ENCODE measurements at regions of chr18 and their contacts with region 1.

Region 1: GRCh38 chr18:70428439-70428838 is 139.6 kb downstream of the SOCS6 start:
- DNase-seq: no peak
- ATAC-seq: no peak
- H3K4me3 ChIP-seq: no peak overlapping the region
- H3K4me3 Mint-ChIP-seq: no peak overlapping the region
- H3K27ac ChIP-seq: no peak overlapping the region
- H3K27ac Mint-ChIP-seq: no peak overlapping the region
- H3K4me1 ChIP-seq: no peaks in the 10 kb centered on the region
- H3K4me1 Mint-ChIP-seq: no peaks in the 10 kb centered on the region
- H3K27me3 ChIP-seq: peaks cover 0 to 4% of the 10 kb centered on the region in 2 experiments
- H3K27me3 Mint-ChIP-seq: no peaks in the 10 kb centered on the region

Region 2: DNA sequence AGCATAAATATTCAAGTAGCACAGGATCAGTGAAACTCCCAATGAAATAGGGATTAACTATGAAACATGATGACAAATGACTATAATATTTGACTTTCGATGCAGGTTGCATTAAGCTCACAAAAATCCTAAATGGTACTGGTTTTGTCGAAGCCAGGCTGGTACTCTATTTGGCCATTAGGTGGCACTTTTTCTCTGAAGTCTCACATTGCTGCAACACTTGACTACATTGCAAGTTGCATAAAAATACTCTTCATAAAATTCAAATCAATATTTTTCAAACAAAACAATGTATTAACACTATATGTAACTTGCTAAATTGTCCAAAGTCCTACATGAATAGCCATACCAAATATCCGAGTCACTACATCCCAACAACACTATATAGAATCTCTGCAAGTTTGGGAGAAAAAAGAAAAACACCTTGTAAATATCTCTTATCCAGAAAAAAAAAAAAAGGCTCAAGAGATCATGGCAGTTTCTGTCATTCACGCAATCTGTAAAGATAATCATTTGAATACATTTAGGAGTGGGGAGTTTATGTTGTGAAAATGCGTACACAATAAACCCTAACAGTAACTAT is 232.5 kb before region 1 on chr18:
- CTCF ChIA-PET with region 1: interaction called, 12 to 29 read pairs
- POLR2A ChIA-PET with region 1: no interaction called
- DNase-seq: peak in 3 of 35 experiments; percentile 3 to 43 (median 4)
- ATAC-seq: peak in 1 of 4 experiments; percentile 48
- H3K4me3 ChIP-seq: no peak overlapping the region
- H3K4me3 Mint-ChIP-seq: no peak overlapping the region
- H3K27ac ChIP-seq: no peak overlapping the region
- H3K27ac Mint-ChIP-seq: no peak overlapping the region
- H3K4me1 ChIP-seq: no peaks in the 10 kb centered on the region
- H3K4me1 Mint-ChIP-seq: peaks cover 5 to 7% (median 5%) of the 10 kb centered on the region in 3 donors
- H3K27me3 ChIP-seq: no peaks in the 10 kb centered on the region
- H3K27me3 Mint-ChIP-seq: no peaks in the 10 kb centered on the region